SK-N-SH (cell line): ENCODE measurements at regions of chr7 and their contacts with region 1.

Region 1: GRCh38 chr7:116180302-116180701 is 30.0 kb upstream of the TES start:
- DNase-seq: peak; percentile 71
- H3K4me3 ChIP-seq: no peak overlapping the region
- H3K27ac ChIP-seq: no peak overlapping the region
- H3K4me1 ChIP-seq: peaks cover 0 to 6% of the 10 kb centered on the region in 2 experiments; a peak in 1 of 4 replicates
- H3K27me3 ChIP-seq: no peaks in the 10 kb centered on the region
- CTCF ChIP-seq: peak; percentile 95
- EP300 ChIP-seq: no peak
- RAD21 ChIP-seq: peak; percentile 95

Region 2: DNA sequence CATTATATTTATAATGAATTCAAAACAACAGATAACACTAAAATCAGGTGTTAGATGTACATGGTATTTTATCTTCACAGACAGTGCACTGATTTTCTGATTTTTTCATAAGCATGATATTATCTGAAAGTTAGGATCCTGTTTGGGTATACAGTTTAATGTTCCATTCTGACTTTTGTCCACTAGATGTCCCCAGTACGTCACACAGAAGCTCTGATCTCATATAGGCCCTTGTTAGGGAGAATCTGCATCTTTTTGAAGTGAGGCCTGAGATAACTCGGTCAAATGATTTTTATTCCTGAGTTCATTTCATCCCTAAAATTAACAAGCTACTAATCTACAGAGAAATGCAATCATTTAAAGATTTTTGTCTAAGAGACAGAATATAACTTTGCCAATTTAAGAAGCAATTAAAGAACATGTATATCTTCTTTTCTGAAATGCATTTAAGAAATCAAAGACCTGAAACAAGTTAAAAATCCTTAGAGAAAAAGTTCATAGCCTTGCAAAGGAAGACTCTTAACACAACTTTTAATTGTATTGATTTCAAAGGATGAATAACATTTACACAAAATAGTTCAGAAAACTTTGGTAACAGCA is 42.0 kb before region 1 on chr7:
- CTCF ChIA-PET with region 1: interaction called, 10 read pairs
- POLR2A ChIA-PET with region 1: no interaction called
- DNase-seq: peak; percentile 44
- H3K4me3 ChIP-seq: no peak overlapping the region
- H3K27ac ChIP-seq: no peak overlapping the region
- H3K4me1 ChIP-seq: no peaks in the 10 kb centered on the region
- H3K27me3 ChIP-seq: peaks cover 46% of the 10 kb centered on the region
- CTCF ChIP-seq: peak; percentile 98
- EP300 ChIP-seq: no peak
- RAD21 ChIP-seq: peak; percentile 79

Region 3: GRCh38 chr7:116195451-116195850 is 15.1 kb after region 1 on chr7:
- CTCF ChIA-PET with region 1: interaction called, 27 read pairs
- POLR2A ChIA-PET with region 1: no interaction called
- DNase-seq: no peak
- H3K4me3 ChIP-seq: no peak overlapping the region
- H3K27ac ChIP-seq: no peak overlapping the region
- H3K4me1 ChIP-seq: no peaks in the 10 kb centered on the region; a peak in 2 of 4 replicates
- H3K27me3 ChIP-seq: peaks cover 14% of the 10 kb centered on the region
- CTCF ChIP-seq: no peak
- EP300 ChIP-seq: no peak
- RAD21 ChIP-seq: no peak

Region 4: GRCh38 chr7:116211006-116211912 is 31.0 kb after region 1 on chr7:
- CTCF ChIA-PET with region 1: interaction called, 37 read pairs
- POLR2A ChIA-PET with region 1: interaction called, 3 read pairs
- DNase-seq: peak; percentile 68
- H3K4me3 ChIP-seq: peak overlapping the region; percentile 57 to 61
- H3K27ac ChIP-seq: peak overlapping the region in 1 of 2 experiments; percentile 87; a peak in 2 of 4 replicates
- H3K4me1 ChIP-seq: peaks cover 0 to 30% of the 10 kb centered on the region in 2 experiments; a peak in 2 of 4 replicates
- H3K27me3 ChIP-seq: peaks cover 57% of the 10 kb centered on the region
- CTCF ChIP-seq: no peak
- EP300 ChIP-seq: peak in 1 of 2 experiments; percentile 18; a peak in 1 of 4 replicates
- RAD21 ChIP-seq: no peak

Region 5: GRCh38 chr7:116224492-116225098 is 44.3 kb after region 1 on chr7:
- CTCF ChIA-PET with region 1: interaction called, 428 read pairs
- POLR2A ChIA-PET with region 1: no interaction called
- DNase-seq: no peak
- H3K4me3 ChIP-seq: no peak overlapping the region
- H3K27ac ChIP-seq: peak overlapping the region in 1 of 2 experiments; percentile 39; a peak in 1 of 4 replicates
- H3K4me1 ChIP-seq: peaks cover 26 to 63% of the 10 kb centered on the region in 2 experiments; a peak in 3 of 4 replicates
- H3K27me3 ChIP-seq: peaks cover 10% of the 10 kb centered on the region; the same call in 1 of the 2 replicates
- CTCF ChIP-seq: no peak
- EP300 ChIP-seq: no peak
- RAD21 ChIP-seq: no peak

Region 6: GRCh38 chr7:116249708-116250553 is 69.6 kb after region 1 on chr7:
- CTCF ChIA-PET with region 1: interaction called, 17 read pairs
- POLR2A ChIA-PET with region 1: no interaction called
- DNase-seq: peak; percentile 40
- H3K4me3 ChIP-seq: no peak overlapping the region
- H3K27ac ChIP-seq: no peak overlapping the region
- H3K4me1 ChIP-seq: no peaks in the 10 kb centered on the region; a peak in 1 of 4 replicates
- H3K27me3 ChIP-seq: no peaks in the 10 kb centered on the region
- CTCF ChIP-seq: peak; percentile 67
- EP300 ChIP-seq: no peak
- RAD21 ChIP-seq: peak; percentile 43

Region 7: GRCh38 chr7:116525913-116526861 is 345.9 kb after region 1 on chr7:
- CTCF ChIA-PET with region 1: interaction called, 16 read pairs
- POLR2A ChIA-PET with region 1: no interaction called
- DNase-seq: peak; percentile 90
- H3K4me3 ChIP-seq: peak overlapping the region; percentile 57 to 84
- H3K27ac ChIP-seq: peak overlapping the region; percentile 91 to 99
- H3K4me1 ChIP-seq: peaks cover 4 to 48% of the 10 kb centered on the region in 2 experiments
- H3K27me3 ChIP-seq: no peaks in the 10 kb centered on the region
- CTCF ChIP-seq: peak; percentile 95
- EP300 ChIP-seq: no peak; a peak in 1 of 4 replicates
- RAD21 ChIP-seq: peak; percentile 48; the same call in 1 of the 2 replicates